Endothelial cell of umbilical vein (primary cell): ENCODE measurements at regions of chr5 and their contacts with region 1.

Region 1: DNA sequence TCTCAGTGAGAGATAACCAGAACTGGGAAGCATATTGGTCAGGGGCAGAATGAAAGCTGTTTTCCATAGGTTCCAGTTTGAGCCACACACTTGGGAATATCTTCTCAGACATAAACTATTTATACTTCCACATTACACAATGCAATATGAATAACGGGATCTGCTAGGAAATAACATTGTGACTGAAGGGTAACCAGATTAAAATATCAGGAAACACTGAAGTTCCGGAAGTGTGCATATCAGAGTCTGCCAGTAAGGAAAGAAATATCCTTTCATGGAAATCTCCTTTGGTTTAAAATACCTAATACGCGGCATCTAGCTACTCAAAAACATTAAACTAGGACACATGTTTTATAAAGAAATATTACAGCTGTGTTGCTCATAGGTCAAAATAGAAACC is 56.3 kb downstream of the ST8SIA4 start:
- DNase-seq: peak; percentile 96
- H3K4me3 ChIP-seq: peak overlapping the region in 1 of 3 experiments; percentile 31
- H3K27ac ChIP-seq: peak overlapping the region; percentile 89
- H3K4me1 ChIP-seq: peaks cover 41% of the 10 kb centered on the region
- H3K27me3 ChIP-seq: no peaks in the 10 kb centered on the region
- CTCF ChIP-seq: no peak
- POLR2A ChIP-seq: peak; percentile 65

Region 2: GRCh38 chr5:100667161-100667630 is 179.6 kb before region 1 on chr5:
- CTCF ChIA-PET with region 1: no interaction called
- POLR2A ChIA-PET with region 1: no interaction called
- dilution Hi-C with region 1: no loop called
- intact Hi-C with region 1: loop called (anchors 5 kb)
- DNase-seq: peak; percentile 54
- H3K4me3 ChIP-seq: no peak overlapping the region
- H3K27ac ChIP-seq: peak overlapping the region; percentile 66
- H3K4me1 ChIP-seq: peaks cover 20% of the 10 kb centered on the region
- H3K27me3 ChIP-seq: no peaks in the 10 kb centered on the region
- CTCF ChIP-seq: no peak
- POLR2A ChIP-seq: no peak

Region 3: GRCh38 chr5:100877274-100877673 is 30.5 kb after region 1 on chr5:
- CTCF ChIA-PET with region 1: interaction called, 3 read pairs
- POLR2A ChIA-PET with region 1: no interaction called
- dilution Hi-C with region 1: no loop called
- intact Hi-C with region 1: loop called (anchors 1 kb)
- DNase-seq: peak; percentile 87
- H3K4me3 ChIP-seq: no peak overlapping the region
- H3K27ac ChIP-seq: peak overlapping the region; percentile 84
- H3K4me1 ChIP-seq: peaks cover 16% of the 10 kb centered on the region
- H3K27me3 ChIP-seq: no peaks in the 10 kb centered on the region
- CTCF ChIP-seq: no peak
- POLR2A ChIP-seq: no peak